Endothelial cell of umbilical vein (primary cell): ENCODE measurements at regions of chr6 and their contacts with region 1.

Region 1: DNA sequence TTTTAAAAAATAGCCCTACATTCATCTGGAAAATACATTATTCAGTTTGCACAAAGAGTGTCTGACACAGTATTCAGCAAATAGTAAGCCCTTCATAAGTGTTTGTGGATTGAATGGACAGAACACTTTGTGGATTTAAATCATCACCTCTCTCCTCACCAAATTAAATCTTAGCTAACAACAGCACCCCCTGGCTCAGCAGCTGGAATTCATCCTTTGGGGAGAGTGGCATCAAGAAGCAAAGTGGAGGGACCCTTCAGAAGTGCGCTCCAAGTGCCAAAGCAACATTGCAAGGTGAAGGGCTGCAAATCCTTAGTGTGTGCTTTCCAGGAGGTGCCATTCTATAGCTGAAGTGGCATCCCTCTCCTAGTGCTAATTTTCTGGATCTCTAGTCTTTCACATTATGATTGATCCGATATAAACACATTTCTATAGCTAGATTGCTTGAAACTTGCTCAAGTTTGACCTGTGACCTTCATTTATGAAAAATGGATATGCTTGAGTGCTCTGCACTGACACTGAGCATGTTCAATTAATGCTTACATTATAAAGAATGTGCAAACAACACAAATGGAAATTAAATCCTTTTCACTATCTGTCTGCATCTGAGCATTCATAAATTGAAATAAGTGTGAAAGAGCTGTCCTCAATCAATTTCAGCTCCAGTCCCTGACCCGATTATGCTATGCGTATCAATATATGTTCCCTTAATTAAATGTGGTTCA is 891.7 kb downstream of the C6orf118 start:
- DNase-seq: no peak
- H3K4me3 ChIP-seq: no peak overlapping the region
- H3K27ac ChIP-seq: no peak overlapping the region
- H3K4me1 ChIP-seq: peaks cover 45% of the 10 kb centered on the region
- H3K27me3 ChIP-seq: no peaks in the 10 kb centered on the region
- CTCF ChIP-seq: no peak
- POLR2A ChIP-seq: no peak

Region 2: DNA sequence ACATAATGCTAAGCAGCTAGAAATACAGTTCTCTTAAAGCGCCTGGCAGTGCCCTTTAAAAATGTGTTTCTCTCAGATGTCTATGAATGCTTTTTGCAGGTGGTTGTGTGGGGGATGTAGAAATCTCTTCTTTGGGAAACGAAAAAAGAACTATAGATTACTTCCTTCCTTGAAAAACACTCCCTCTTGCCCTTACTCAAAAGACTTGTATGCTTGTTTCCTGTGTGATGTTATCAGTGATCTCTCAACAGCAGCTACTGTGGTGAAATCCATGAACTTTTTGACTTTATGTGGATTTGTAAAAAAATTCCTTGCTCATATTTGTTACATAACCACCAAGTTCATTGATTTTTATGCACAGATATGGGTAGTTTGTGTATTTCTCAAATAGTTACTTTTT is 86.7 kb before region 1 on chr6:
- CTCF ChIA-PET with region 1: no interaction called
- POLR2A ChIA-PET with region 1: no interaction called
- dilution Hi-C with region 1: no loop called
- intact Hi-C with region 1: loop called (anchors 5 kb)
- DNase-seq: peak; percentile 54
- H3K4me3 ChIP-seq: no peak overlapping the region
- H3K27ac ChIP-seq: no peak overlapping the region
- H3K4me1 ChIP-seq: peaks cover 12% of the 10 kb centered on the region
- H3K27me3 ChIP-seq: no peaks in the 10 kb centered on the region
- CTCF ChIP-seq: no peak
- POLR2A ChIP-seq: no peak

Region 3: GRCh38 chr6:164370773-164371172 is 46.9 kb before region 1 on chr6:
- CTCF ChIA-PET with region 1: no interaction called
- POLR2A ChIA-PET with region 1: no interaction called
- dilution Hi-C with region 1: no loop called
- intact Hi-C with region 1: loop called (anchors 1 kb)
- DNase-seq: no peak
- H3K4me3 ChIP-seq: no peak overlapping the region
- H3K27ac ChIP-seq: no peak overlapping the region
- H3K4me1 ChIP-seq: peaks cover 15% of the 10 kb centered on the region
- H3K27me3 ChIP-seq: no peaks in the 10 kb centered on the region
- CTCF ChIP-seq: no peak
- POLR2A ChIP-seq: no peak

Region 4: GRCh38 chr6:164398647-164399046 is 19.1 kb before region 1 on chr6:
- CTCF ChIA-PET with region 1: interaction called, 12 read pairs
- POLR2A ChIA-PET with region 1: no interaction called
- dilution Hi-C with region 1: no loop called
- intact Hi-C with region 1: loop called (anchors 1 kb)
- DNase-seq: peak; percentile 51
- H3K4me3 ChIP-seq: no peak overlapping the region
- H3K27ac ChIP-seq: peak overlapping the region; percentile 26
- H3K4me1 ChIP-seq: peaks cover 29% of the 10 kb centered on the region
- H3K27me3 ChIP-seq: no peaks in the 10 kb centered on the region
- CTCF ChIP-seq: no peak
- POLR2A ChIP-seq: no peak

Region 5: GRCh38 chr6:164533069-164533362 is 115.3 kb after region 1 on chr6:
- CTCF ChIA-PET with region 1: no interaction called
- POLR2A ChIA-PET with region 1: no interaction called
- dilution Hi-C with region 1: no loop called
- intact Hi-C with region 1: no loop called
- DNase-seq: no peak
- H3K4me3 ChIP-seq: no peak overlapping the region
- H3K27ac ChIP-seq: no peak overlapping the region
- H3K4me1 ChIP-seq: no peaks in the 10 kb centered on the region
- H3K27me3 ChIP-seq: no peaks in the 10 kb centered on the region
- CTCF ChIP-seq: no peak
- POLR2A ChIP-seq: no peak